ENCODE measurements at regions of chr3 and their contacts with region 1.

Region 1: GRCh38 chr3:56801662-56802377 is at the start of gene ARHGEF3:
- DNase-seq: peak; percentile 84 to 91 (median 87)
- H3K4me3 ChIP-seq: peak within 1 kb of the TSS; percentile 75
- H3K4me3 Mint-ChIP-seq: peak within 1 kb of the TSS; percentile 89 to 100 (median 94)
- H3K27ac ChIP-seq: peak within 1 kb of the TSS; percentile 73
- H3K27ac Mint-ChIP-seq: peak within 1 kb of the TSS; percentile 78 to 95 (median 92)
- H3K4me1 ChIP-seq: peaks cover 37% of the 10 kb centered on the region
- H3K4me1 Mint-ChIP-seq: peaks cover 35 to 50% (median 39%) of the 10 kb centered on the region in 3 donors
- H3K27me3 ChIP-seq: no peaks in the 10 kb centered on the region
- H3K27me3 Mint-ChIP-seq: no peaks in the 10 kb centered on the region
- total RNA-seq, gene ARHGEF3: 55.1 to 56.6 TPM

Region 2: GRCh38 chr3:56645407-56645806 is 156.4 kb before region 1 on chr3:
- CTCF ChIA-PET with region 1: no interaction called
- POLR2A ChIA-PET with region 1: no interaction called
- DNase-seq: no peak
- H3K4me3 ChIP-seq: no peak overlapping the region
- H3K4me3 Mint-ChIP-seq: no peak overlapping the region
- H3K27ac ChIP-seq: no peak overlapping the region
- H3K27ac Mint-ChIP-seq: peak overlapping the region in 2 of 8 donors; percentile 21 to 58
- H3K4me1 ChIP-seq: no peaks in the 10 kb centered on the region
- H3K4me1 Mint-ChIP-seq: peaks cover 31 to 45% (median 44%) of the 10 kb centered on the region in 3 donors
- H3K27me3 ChIP-seq: no peaks in the 10 kb centered on the region
- H3K27me3 Mint-ChIP-seq: no peaks in the 10 kb centered on the region

Region 3: DNA sequence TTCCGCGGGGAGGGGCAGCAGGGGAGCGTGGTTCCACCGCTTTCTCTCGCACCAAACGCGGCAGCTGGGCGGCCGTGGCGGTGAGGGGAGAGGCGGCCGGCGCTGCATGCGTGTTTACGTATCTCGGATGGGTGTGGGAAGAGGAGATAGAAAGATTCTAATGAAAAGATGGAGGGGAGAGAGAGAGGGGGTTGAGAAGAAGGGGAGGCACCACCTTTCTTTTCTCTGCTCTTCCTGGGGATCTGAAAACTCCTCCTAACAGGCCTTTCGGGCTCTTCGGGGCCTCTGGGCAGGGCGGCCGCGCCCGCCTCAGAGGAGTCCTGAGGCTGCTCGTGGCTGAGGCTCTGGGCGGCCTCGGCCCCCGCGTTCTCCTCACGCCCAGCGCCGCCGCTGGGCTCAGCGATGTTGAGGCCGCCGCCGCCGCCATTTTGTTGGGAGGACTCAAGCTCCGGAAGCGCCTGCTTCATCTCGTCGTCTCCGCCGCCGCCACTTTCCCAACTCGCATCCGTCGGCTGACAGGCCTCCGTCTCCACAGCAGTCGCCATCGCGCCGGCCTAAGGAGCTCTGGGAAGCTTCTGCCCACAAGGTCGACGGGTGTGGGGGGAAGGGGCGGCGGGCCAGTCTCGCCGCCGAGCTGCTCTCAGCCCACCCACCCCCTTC is 119.2 kb before region 1 on chr3:
- CTCF ChIA-PET with region 1: interaction called, 13 read pairs
- POLR2A ChIA-PET with region 1: interaction called, 32 read pairs
- DNase-seq: peak; percentile 68 to 87 (median 79)
- H3K4me3 ChIP-seq: peak overlapping the region; percentile 70
- H3K4me3 Mint-ChIP-seq: peak overlapping the region; percentile 92 to 98 (median 95)
- H3K27ac ChIP-seq: peak overlapping the region; percentile 91
- H3K27ac Mint-ChIP-seq: peak overlapping the region; percentile 94 to 99 (median 96)
- H3K4me1 ChIP-seq: peaks cover 45% of the 10 kb centered on the region
- H3K4me1 Mint-ChIP-seq: peaks cover 38 to 52% (median 47%) of the 10 kb centered on the region in 3 donors
- H3K27me3 ChIP-seq: no peaks in the 10 kb centered on the region
- H3K27me3 Mint-ChIP-seq: no peaks in the 10 kb centered on the region

Region 4: GRCh38 chr3:56725175-56725574 is 76.6 kb before region 1 on chr3:
- CTCF ChIA-PET with region 1: interaction called, 39 read pairs
- POLR2A ChIA-PET with region 1: interaction called, 17 read pairs
- DNase-seq: peak; percentile 31 to 84 (median 64)
- H3K4me3 ChIP-seq: peak overlapping the region; percentile 26
- H3K4me3 Mint-ChIP-seq: peak overlapping the region; percentile 57 to 82 (median 76)
- H3K27ac ChIP-seq: no peak overlapping the region
- H3K27ac Mint-ChIP-seq: peak overlapping the region; percentile 77 to 96 (median 94)
- H3K4me1 ChIP-seq: peaks cover 32% of the 10 kb centered on the region
- H3K4me1 Mint-ChIP-seq: peaks cover 63 to 74% (median 67%) of the 10 kb centered on the region in 3 donors
- H3K27me3 ChIP-seq: no peaks in the 10 kb centered on the region
- H3K27me3 Mint-ChIP-seq: no peaks in the 10 kb centered on the region

Region 5: GRCh38 chr3:56753206-56753820 is 48.5 kb before region 1 on chr3:
- CTCF ChIA-PET with region 1: interaction called, 127 read pairs
- POLR2A ChIA-PET with region 1: interaction called, 50 read pairs
- DNase-seq: peak in 1 of 5 donors; percentile 52
- H3K4me3 ChIP-seq: no peak overlapping the region
- H3K4me3 Mint-ChIP-seq: peak overlapping the region; percentile 72 to 95 (median 91)
- H3K27ac ChIP-seq: no peak overlapping the region
- H3K27ac Mint-ChIP-seq: peak overlapping the region; percentile 87 to 99 (median 96)
- H3K4me1 ChIP-seq: peaks cover 61% of the 10 kb centered on the region
- H3K4me1 Mint-ChIP-seq: peaks cover 75 to 81% (median 79%) of the 10 kb centered on the region in 3 donors
- H3K27me3 ChIP-seq: no peaks in the 10 kb centered on the region
- H3K27me3 Mint-ChIP-seq: no peaks in the 10 kb centered on the region

Region 6: DNA sequence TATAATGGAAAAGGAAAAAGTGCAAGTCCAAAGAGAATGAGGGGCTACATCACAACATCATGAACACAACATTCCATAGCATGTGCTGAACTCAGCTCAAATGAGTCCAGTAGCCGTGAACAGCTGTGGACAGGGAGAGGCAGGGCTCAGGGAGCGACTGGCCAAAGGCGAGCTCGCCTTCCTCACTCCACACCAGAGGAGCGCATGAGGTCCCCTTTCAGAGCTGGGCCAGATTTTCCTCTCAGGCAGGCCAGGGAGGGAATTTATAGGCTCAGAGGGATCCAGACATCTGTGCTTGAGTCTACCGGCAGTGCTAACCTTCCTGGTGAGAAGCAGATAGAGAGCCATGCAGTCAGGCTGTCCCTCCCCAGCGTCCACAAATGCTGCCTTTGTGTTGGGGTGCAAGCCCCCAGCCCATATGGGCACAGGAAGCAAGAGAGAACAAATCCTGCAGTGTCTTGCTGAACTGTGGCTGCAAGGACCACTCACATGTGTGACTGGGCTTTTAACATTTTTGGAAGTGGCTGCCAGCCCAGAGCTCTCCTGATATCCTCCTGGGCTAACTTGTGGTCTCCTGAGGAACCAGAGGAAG is 32.6 kb before region 1 on chr3:
- CTCF ChIA-PET with region 1: interaction called, 11 read pairs
- POLR2A ChIA-PET with region 1: interaction called, 8 read pairs
- DNase-seq: no peak
- H3K4me3 ChIP-seq: no peak overlapping the region
- H3K4me3 Mint-ChIP-seq: peak overlapping the region in 2 of 7 donors; percentile 15
- H3K27ac ChIP-seq: no peak overlapping the region
- H3K27ac Mint-ChIP-seq: peak overlapping the region; percentile 25 to 87 (median 65)
- H3K4me1 ChIP-seq: peaks cover 49% of the 10 kb centered on the region
- H3K4me1 Mint-ChIP-seq: peaks cover 63 to 85% (median 83%) of the 10 kb centered on the region in 3 donors
- H3K27me3 ChIP-seq: no peaks in the 10 kb centered on the region
- H3K27me3 Mint-ChIP-seq: no peaks in the 10 kb centered on the region

Region 7: DNA sequence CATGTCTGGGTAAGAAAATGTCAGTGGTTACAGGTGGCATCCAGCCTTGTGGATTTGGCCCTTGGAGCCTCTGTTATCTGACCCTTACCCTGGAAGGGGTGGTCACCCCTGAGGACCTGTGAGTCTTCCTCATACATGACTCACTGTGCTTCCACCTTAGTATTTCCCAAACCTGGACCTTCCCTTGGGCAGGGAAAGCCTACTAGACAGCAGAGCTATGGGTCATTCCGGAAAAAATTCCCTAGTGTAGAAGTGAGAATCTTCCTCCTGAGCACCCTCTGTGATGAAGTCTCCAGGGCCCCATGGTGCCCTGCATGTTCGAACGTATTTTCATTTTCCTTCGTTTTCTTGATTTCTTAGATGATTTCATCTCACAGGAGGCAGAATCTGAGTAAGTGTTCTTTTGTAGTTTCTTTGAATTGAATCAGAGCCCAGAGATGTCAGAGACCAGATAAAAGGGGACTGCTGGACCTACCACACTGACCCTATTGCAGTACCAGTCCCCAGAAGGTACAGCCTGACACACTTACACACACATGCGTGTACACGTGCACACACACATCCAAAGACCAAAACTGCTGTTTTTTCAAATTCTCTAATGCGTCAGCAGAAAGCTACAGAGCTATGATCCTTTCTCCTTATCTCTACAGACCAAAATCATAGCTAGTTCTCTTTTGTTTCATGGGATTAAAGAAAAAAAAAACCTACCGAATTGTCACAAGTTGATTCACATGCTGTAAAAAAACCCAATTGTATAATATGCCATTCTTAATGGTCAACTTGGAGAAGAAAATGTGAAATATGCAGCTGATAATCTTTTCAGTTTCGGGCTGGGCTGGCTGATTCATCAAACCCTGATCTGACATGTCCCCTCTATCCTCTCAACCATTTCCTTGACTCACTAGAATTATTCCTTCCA is 50.4 kb after region 1 on chr3:
- CTCF ChIA-PET with region 1: no interaction called
- POLR2A ChIA-PET with region 1: no interaction called
- DNase-seq: no peak
- H3K4me3 ChIP-seq: no peak overlapping the region
- H3K4me3 Mint-ChIP-seq: no peak overlapping the region
- H3K27ac ChIP-seq: no peak overlapping the region
- H3K27ac Mint-ChIP-seq: no peak overlapping the region
- H3K4me1 ChIP-seq: peaks cover 7% of the 10 kb centered on the region
- H3K4me1 Mint-ChIP-seq: peaks cover 20 to 65% (median 37%) of the 10 kb centered on the region in 3 donors
- H3K27me3 ChIP-seq: no peaks in the 10 kb centered on the region
- H3K27me3 Mint-ChIP-seq: no peaks in the 10 kb centered on the region

Region 8: DNA sequence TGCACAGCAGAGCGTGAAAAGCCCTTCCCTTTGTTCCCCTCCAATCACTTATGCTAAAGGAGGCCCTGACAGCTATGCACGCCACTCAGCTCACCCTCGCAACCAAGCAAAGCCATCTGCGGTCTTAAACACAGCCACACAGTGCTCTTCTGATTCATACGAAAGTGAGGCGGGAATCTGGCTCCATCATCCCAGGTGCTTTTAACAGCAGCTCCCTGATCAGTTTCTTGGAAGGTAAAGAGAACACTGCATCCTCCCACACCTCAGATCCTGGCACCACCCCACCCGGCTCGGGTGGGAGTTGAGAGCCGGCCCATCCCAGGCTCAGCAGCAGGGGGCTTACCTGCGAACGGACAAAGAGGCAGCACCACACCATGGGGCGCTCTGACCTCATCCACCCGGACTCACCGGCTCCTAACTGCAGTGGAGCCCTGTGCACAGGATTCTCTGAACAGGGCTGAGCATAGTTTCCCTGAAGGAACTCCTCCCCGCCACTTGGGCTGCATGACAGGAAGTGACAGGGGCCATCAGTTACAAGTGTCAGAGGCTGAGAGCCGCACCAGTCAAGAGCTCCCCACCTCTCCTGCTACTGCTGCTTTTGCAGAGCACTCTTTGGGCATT is 114.3 kb after region 1 on chr3:
- CTCF ChIA-PET with region 1: interaction called, 43 read pairs
- POLR2A ChIA-PET with region 1: interaction called, 25 read pairs
- DNase-seq: peak; percentile 59 to 83 (median 68)
- H3K4me3 ChIP-seq: peak overlapping the region; percentile 94
- H3K4me3 Mint-ChIP-seq: peak overlapping the region; percentile 90 to 95 (median 92)
- H3K27ac ChIP-seq: peak overlapping the region; percentile 83
- H3K27ac Mint-ChIP-seq: peak overlapping the region; percentile 90 to 99 (median 94)
- H3K4me1 ChIP-seq: peaks cover 71% of the 10 kb centered on the region
- H3K4me1 Mint-ChIP-seq: peaks cover 66 to 92% (median 84%) of the 10 kb centered on the region in 3 donors
- H3K27me3 ChIP-seq: no peaks in the 10 kb centered on the region
- H3K27me3 Mint-ChIP-seq: no peaks in the 10 kb centered on the region

Region 9: DNA sequence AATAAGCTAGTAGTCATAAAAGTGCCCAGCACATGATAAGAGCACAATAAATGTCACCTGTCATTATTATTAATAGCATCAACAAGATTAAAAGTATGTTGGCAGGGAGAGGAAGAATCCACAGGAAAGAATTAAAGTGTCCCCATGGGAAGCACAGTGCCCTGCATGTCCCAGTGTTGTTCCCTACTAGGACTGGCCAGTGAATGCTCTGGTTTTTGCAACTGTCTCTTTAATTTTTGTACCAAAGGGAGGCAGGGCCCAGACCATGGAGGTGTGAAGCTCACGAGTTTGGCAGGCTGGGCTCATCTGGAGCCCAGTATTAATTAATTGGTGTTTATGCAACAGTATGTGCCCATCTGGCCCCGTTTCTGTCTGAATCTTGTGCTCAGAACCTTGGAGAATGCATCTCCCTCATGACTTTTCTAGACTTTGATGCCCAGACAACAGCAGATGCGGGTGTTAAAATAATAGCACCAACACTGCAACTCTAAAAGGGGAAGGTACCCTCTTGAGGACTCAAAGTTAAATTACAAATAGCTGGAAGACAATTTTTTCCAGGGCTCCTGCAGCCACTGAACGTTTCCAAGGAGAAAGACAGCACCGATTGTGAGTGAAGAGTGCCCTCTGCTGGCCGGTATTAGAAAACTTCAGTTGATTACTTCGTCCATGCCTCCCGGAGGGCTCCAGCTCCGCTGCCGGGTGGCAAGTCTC is 186.8 kb after region 1 on chr3:
- CTCF ChIA-PET with region 1: interaction called, 135 read pairs
- POLR2A ChIA-PET with region 1: interaction called, 6 read pairs
- DNase-seq: peak; percentile 58 to 75 (median 63)
- H3K4me3 ChIP-seq: no peak overlapping the region
- H3K4me3 Mint-ChIP-seq: peak overlapping the region in 1 of 7 donors; percentile 40
- H3K27ac ChIP-seq: no peak overlapping the region
- H3K27ac Mint-ChIP-seq: peak overlapping the region in 2 of 8 donors; percentile 4
- H3K4me1 ChIP-seq: peaks cover 8% of the 10 kb centered on the region
- H3K4me1 Mint-ChIP-seq: peaks cover 9 to 24% (median 19%) of the 10 kb centered on the region in 3 donors
- H3K27me3 ChIP-seq: no peaks in the 10 kb centered on the region
- H3K27me3 Mint-ChIP-seq: peaks cover 8 to 22% of the 10 kb centered on the region in 2 donors

Measured in CD8-positive, alpha-beta memory T cell (primary cell).